ENCODE measurements at regions of chr7 and their contacts with region 1.

Region 1: GRCh38 chr7:93980744-93981479 is 23.2 kb downstream of the BET1 start:
- H3K4me3 Mint-ChIP-seq: no peak overlapping the region
- H3K27ac Mint-ChIP-seq: no peak overlapping the region
- H3K4me1 Mint-ChIP-seq: no peaks in the 10 kb centered on the region
- H3K27me3 Mint-ChIP-seq: no peaks in the 10 kb centered on the region

Region 2: GRCh38 chr7:94022550-94022949 is 41.6 kb after region 1 on chr7:
- intact Hi-C with region 1: loop called (anchors 5 kb)
- H3K4me3 Mint-ChIP-seq: no peak overlapping the region
- H3K27ac Mint-ChIP-seq: no peak overlapping the region
- H3K4me1 Mint-ChIP-seq: no peaks in the 10 kb centered on the region
- H3K27me3 Mint-ChIP-seq: peaks cover 2% of the 10 kb centered on the region

Measured in dendritic cell treated with granulocyte-macrophage colony-stimulating factor and Interleukin-4, amounts not matched to agents 40 ng/mL and 50 ng/mL, for 4 days (primary cell).